Uterus (tissue), 4 donors: ENCODE measurements at regions of chr19 and their contacts with region 1.

Region 1: DNA sequence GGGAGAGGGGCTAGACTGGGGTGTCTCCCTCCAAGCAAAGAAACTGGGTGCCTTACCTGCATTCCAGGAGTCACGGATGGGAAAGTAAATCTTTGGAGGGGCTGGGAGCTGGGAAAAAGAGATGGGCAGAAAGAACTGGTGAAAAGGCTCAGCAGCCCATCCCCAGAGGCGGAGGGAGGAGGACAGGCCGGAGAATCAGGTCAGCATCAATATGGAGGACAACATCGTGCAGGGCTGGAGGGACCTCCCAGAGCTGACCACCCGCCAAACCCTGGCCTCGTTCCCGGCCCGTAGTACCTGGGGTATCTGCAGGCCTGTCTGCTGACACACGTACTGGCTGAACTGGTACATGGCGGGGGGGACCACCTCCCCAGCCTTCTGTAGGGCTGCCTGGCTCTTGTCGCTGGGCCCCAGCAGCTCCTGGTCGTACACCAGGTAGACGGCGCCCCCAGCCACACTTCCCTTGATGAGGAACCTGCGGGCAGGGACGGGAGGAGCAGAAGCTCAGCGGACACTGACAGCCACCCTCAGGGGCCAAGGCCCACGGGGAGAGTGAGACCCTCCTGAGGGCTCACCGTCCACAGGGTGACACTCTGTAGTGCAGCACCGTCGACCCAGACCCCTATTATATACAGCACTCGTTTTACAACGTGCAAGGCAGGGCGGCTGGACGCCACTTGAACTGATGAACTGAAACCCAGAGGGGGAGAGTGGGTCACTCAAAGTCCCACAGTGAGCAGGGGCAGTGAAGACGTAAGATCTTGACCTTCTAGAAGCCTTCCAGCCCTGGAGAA is 830 bp downstream of the MICOS13 start:
- DNase-seq: no peak
- H3K4me3 ChIP-seq: peak overlapping the region; percentile 59 to 91
- H3K27ac ChIP-seq: peak overlapping the region; percentile 91 to 95
- H3K4me1 ChIP-seq: peaks cover 0 to 3% of the 10 kb centered on the region in 2 donors
- H3K27me3 ChIP-seq: no peaks in the 10 kb centered on the region
- CTCF ChIP-seq: no peak
- POLR2A ChIP-seq: no peak

Region 2: DNA sequence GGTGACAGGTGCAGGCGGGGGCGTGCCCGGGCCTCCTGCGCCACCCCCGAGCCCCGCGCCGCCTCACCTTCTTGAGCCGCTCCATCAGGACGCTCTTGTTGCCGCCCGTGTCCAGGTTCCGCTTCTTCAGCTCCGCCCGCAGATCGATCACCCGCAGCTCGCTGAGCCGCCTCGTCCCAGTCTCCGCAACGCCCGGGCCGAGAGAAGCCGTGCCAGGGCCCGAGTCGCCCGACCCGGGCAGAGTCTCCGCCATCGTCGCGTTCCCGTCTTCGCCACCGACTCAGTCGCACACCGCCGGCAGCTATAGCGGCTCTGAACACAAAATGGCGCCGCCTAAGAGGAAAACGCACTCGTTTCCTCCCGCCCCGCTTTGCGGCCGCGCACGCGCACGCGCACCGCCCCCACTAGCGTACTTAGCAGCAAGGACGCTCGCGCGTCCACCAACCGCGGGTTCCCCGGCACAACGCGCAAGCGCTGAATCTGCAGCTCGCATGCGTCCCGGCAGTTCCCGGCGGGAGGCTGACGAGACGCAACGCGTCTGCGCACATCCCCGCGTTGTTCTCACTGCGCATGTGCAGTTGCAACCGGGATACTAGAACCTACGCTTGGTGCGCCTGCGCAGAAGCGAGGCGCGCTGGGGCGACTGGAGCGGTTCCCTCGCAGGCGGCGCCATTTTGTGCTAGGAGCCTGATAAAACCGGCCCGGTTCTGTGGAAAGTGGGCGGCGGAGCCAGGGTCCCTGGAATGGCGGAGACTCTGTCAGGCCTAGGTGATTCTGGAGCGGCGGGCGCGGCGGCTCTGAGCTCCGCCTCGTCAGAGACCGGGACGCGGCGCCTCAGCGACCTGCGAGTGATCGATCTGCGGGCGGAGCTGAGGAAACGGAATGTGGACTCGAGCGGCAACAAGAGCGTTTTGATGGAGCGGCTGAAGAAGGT is 56.8 kb before region 1 on chr19 and contains the starts of genes SAFB and SAFB2:
- intact Hi-C with region 1: loop called (anchors 10 kb)
- DNase-seq: peak; percentile 99 to 100
- H3K4me3 ChIP-seq: peak within 1 kb of the TSS; percentile 68 to 98
- H3K27ac ChIP-seq: peak within 1 kb of the TSS; percentile 93 to 98
- H3K4me1 ChIP-seq: peaks cover 9 to 39% of the 10 kb centered on the region in 2 donors
- H3K27me3 ChIP-seq: no peaks in the 10 kb centered on the region
- CTCF ChIP-seq: peak in 2 of 4 experiments; percentile 7 to 15
- POLR2A ChIP-seq: peak; percentile 87 to 98
- total RNA-seq, gene SAFB: 35.9 to 129 (median 97.4) TPM
- total RNA-seq, gene SAFB2: 45.0 to 250 (median 129) TPM

Region 3: GRCh38 chr19:5857203-5858081 is 178.0 kb after region 1 on chr19:
- intact Hi-C with region 1: no loop called
- DNase-seq: no peak
- H3K4me3 ChIP-seq: no peak overlapping the region
- H3K27ac ChIP-seq: no peak overlapping the region
- H3K4me1 ChIP-seq: no peaks in the 10 kb centered on the region
- H3K27me3 ChIP-seq: no peaks in the 10 kb centered on the region
- CTCF ChIP-seq: no peak
- POLR2A ChIP-seq: no peak